GM12878 (cell line): ENCODE measurements at regions of chr11 and their contacts with region 1.

Region 1: GRCh38 chr11:86483940-86484794 is 109.5 kb downstream of the CCDC81 start:
- DNase-seq: no peak
- ATAC-seq: no peak
- H3K4me3 ChIP-seq: no peak overlapping the region
- H3K27ac ChIP-seq: no peak overlapping the region
- H3K4me1 ChIP-seq: no peaks in the 10 kb centered on the region
- H3K27me3 ChIP-seq: peaks cover 0 to 2% of the 10 kb centered on the region in 2 experiments; a peak in 1 of 4 replicates
- CTCF ChIP-seq: no peak
- EP300 ChIP-seq: no peak
- POLR2A ChIP-seq: no peak
- RAD21 ChIP-seq: no peak

Region 2: GRCh38 chr11:86302100-86302793 is 181.9 kb before region 1 on chr11 and contains the start of gene HIKESHI:
- CTCF ChIA-PET with region 1: no interaction called
- POLR2A ChIA-PET with region 1: no interaction called
- RAD21 ChIA-PET with region 1: no interaction called
- SMC1A ChIA-PET with region 1: no interaction called
- in situ Hi-C with region 1: no loop called
- intact Hi-C with region 1: no loop called
- DNase-seq: peak; percentile 76
- ATAC-seq: peak; percentile 99
- H3K4me3 ChIP-seq: peak within 1 kb of the TSS; percentile 87
- H3K27ac ChIP-seq: peak within 1 kb of the TSS; percentile 87
- H3K4me1 ChIP-seq: 0 out of 2 replicates have a peak, but pooled peaks cover 3% of the 10 kb centered on the region
- H3K27me3 ChIP-seq: no peaks in the 10 kb centered on the region
- CTCF ChIP-seq: no peak
- EP300 ChIP-seq: no peak
- POLR2A ChIP-seq: peak; percentile 91
- RAD21 ChIP-seq: no peak
- polyA plus RNA-seq, gene HIKESHI: 156 to 228 TPM

Region 3: GRCh38 chr11:86502137-86502642 is 18.0 kb after region 1 on chr11:
- CTCF ChIA-PET with region 1: interaction called, 4 read pairs
- POLR2A ChIA-PET with region 1: interaction called, 4 read pairs
- RAD21 ChIA-PET with region 1: interaction called, 6 read pairs
- SMC1A ChIA-PET with region 1: interaction called, 15 read pairs
- in situ Hi-C with region 1: no loop called
- intact Hi-C with region 1: no loop called
- DNase-seq: no peak
- ATAC-seq: no peak
- H3K4me3 ChIP-seq: no peak overlapping the region
- H3K27ac ChIP-seq: no peak overlapping the region
- H3K4me1 ChIP-seq: no peaks in the 10 kb centered on the region
- H3K27me3 ChIP-seq: peaks cover 0 to 2% of the 10 kb centered on the region in 2 experiments; a peak in 3 of 4 replicates
- CTCF ChIP-seq: no peak
- EP300 ChIP-seq: no peak
- POLR2A ChIP-seq: no peak
- RAD21 ChIP-seq: no peak